GM12878 (cell line): ENCODE measurements at regions of chr3 and their contacts with region 1.

Region 1: DNA sequence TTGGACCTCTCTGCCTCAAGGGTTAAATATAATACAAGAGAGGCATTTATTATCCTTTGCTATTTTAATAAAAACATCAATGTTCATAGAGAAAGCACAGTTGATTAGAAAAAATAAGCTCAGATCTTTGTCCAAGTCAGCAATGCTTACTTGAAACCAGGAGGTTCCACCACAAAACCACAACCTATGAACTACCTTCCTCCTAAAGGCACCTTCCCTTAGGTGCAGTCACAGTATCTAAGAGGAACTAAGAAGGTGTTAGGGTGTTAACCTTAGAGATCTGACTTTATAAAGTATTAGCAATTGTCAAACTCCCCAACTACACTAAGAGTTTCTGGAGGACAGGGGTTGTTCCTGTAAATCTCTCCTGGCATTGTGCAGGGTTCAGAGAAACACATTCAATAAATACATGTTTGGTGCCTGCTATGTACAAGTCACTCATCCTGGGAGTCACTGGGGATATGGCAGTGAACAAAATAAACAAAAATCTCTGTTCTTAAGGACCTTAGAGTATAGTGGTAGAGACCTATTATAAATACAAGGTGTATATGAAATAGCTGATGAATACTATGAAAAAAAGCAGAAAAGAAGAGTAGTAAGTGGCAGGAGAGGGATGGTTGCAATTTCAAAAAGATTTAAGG is 208.6 kb downstream of the NFKBIZ start:
- DNase-seq: peak; percentile 85
- ATAC-seq: peak; percentile 79
- H3K4me3 ChIP-seq: no peak overlapping the region
- H3K27ac ChIP-seq: peak overlapping the region; percentile 65
- H3K4me1 ChIP-seq: peaks cover 37% of the 10 kb centered on the region
- H3K27me3 ChIP-seq: no peaks in the 10 kb centered on the region
- CTCF ChIP-seq: no peak
- EP300 ChIP-seq: peak; percentile 76 to 79; a peak in 3 of 4 replicates
- POLR2A ChIP-seq: no peak
- RAD21 ChIP-seq: no peak

Region 2: DNA sequence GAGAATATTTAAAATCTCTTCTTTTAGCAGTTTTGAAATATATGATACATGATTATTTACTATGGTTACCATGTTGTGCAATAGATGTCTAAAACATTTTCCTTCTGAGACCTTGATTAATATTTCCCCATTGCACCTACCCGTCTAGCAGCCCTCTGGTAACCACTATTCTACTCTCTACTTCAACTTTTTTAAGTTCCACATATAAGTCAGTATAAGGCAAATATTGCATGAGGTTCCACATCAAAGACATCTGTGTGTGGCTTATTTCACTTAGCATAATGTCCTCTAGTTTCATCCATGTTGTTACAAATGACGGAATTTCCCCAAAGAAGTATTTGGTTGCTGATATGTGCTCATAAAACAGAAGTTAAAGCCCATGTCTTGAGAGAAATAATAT is 238.1 kb before region 1 on chr3:
- CTCF ChIA-PET with region 1: interaction called, 8 read pairs
- POLR2A ChIA-PET with region 1: interaction called, 7 read pairs
- RAD21 ChIA-PET with region 1: interaction called, 8 read pairs
- SMC1A ChIA-PET with region 1: interaction called, 16 read pairs
- in situ Hi-C with region 1: no loop called
- intact Hi-C with region 1: no loop called
- DNase-seq: no peak
- ATAC-seq: peak; percentile 93
- H3K4me3 ChIP-seq: no peak overlapping the region
- H3K27ac ChIP-seq: no peak overlapping the region
- H3K4me1 ChIP-seq: peaks cover 24% of the 10 kb centered on the region
- H3K27me3 ChIP-seq: no peaks in the 10 kb centered on the region
- CTCF ChIP-seq: no peak
- EP300 ChIP-seq: peak in 1 of 2 experiments; percentile 47; a peak in 1 of 4 replicates
- POLR2A ChIP-seq: no peak
- RAD21 ChIP-seq: no peak

Region 3: GRCh38 chr3:101836652-101837598 is 221.0 kb before region 1 on chr3:
- CTCF ChIA-PET with region 1: no interaction called
- POLR2A ChIA-PET with region 1: no interaction called
- RAD21 ChIA-PET with region 1: interaction called, 17 read pairs
- SMC1A ChIA-PET with region 1: interaction called, 3 read pairs
- in situ Hi-C with region 1: no loop called
- intact Hi-C with region 1: no loop called
- DNase-seq: no peak
- ATAC-seq: peak; percentile 35
- H3K4me3 ChIP-seq: peak overlapping the region; percentile 32; the same call in 1 of the 2 replicates
- H3K27ac ChIP-seq: 0 out of 2 replicates have a peak overlapping the region, but pooled peaks have one; percentile 27
- H3K4me1 ChIP-seq: peaks cover 40% of the 10 kb centered on the region
- H3K27me3 ChIP-seq: no peaks in the 10 kb centered on the region
- CTCF ChIP-seq: no peak
- EP300 ChIP-seq: peak in 1 of 2 experiments; percentile 19; a peak in 1 of 4 replicates
- POLR2A ChIP-seq: no peak
- RAD21 ChIP-seq: no peak

Region 4: DNA sequence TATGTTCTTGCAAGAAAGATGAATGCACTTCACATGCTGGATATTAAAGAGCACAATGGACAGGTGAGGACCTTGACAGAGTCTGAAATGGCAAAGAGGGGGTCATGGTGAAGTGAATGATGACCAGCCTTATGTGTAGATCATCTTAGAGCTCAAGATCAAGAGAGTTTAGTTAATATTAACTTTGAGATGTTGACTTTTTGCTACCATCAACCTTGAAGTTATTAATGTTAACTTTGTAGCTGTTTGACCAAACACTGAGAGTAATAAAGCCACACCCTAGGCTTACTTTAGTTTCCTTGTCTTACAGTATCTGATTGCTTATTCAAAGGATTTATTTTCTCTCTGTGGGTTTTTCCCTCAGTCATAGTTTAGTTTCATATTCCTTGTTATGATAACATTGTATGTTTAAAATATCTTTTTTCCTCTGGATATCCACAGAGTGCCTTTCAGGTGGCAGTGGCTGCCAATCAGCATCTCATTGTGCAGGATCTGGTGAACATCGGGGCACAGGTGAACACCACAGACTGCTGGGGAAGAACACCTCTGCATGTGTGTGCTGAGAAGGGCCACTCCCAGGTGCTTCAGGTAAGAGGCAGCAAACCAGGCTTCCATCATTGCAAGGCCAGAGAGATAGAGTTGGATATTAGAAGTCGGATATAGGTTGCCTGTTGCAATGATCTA is 203.1 kb before region 1 on chr3:
- CTCF ChIA-PET with region 1: interaction called, 3 read pairs
- POLR2A ChIA-PET with region 1: interaction called, 7 read pairs
- RAD21 ChIA-PET with region 1: interaction called, 22 read pairs
- SMC1A ChIA-PET with region 1: interaction called, 14 read pairs
- in situ Hi-C with region 1: no loop called
- intact Hi-C with region 1: loop called (anchors 5 kb)
- DNase-seq: no peak
- ATAC-seq: no peak
- H3K4me3 ChIP-seq: no peak overlapping the region
- H3K27ac ChIP-seq: no peak overlapping the region
- H3K4me1 ChIP-seq: peaks cover 17% of the 10 kb centered on the region
- H3K27me3 ChIP-seq: no peaks in the 10 kb centered on the region
- CTCF ChIP-seq: no peak
- EP300 ChIP-seq: no peak
- POLR2A ChIP-seq: no peak
- RAD21 ChIP-seq: no peak

Region 5: GRCh38 chr3:101884776-101885175 is 173.1 kb before region 1 on chr3:
- CTCF ChIA-PET with region 1: no interaction called
- POLR2A ChIA-PET with region 1: no interaction called
- RAD21 ChIA-PET with region 1: no interaction called
- SMC1A ChIA-PET with region 1: no interaction called
- in situ Hi-C with region 1: no loop called
- intact Hi-C with region 1: no loop called
- DNase-seq: no peak
- ATAC-seq: no peak
- H3K4me3 ChIP-seq: no peak overlapping the region
- H3K27ac ChIP-seq: no peak overlapping the region
- H3K4me1 ChIP-seq: no peaks in the 10 kb centered on the region
- H3K27me3 ChIP-seq: no peaks in the 10 kb centered on the region
- CTCF ChIP-seq: no peak
- EP300 ChIP-seq: no peak
- POLR2A ChIP-seq: no peak
- RAD21 ChIP-seq: no peak

Region 6: DNA sequence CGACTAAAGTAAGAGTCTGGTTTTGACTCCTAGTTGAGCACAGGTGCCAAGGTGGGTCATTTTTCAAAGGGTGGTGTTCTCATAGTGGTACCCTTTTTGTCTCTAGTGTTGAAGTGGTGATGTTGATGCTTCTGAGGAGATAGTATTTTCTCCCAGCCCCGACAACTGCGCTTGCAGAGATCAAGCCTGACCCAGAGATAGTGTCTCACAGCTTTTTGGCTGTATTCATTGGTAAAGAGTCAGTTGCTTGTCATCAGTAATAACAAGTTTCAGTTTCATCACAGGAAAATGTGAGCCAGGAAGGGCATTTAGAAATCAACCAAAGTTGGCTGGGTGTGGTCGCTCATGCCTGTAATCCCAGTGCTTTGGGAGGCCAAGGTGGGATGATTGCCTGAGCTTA is 69.3 kb before region 1 on chr3:
- CTCF ChIA-PET with region 1: no interaction called
- POLR2A ChIA-PET with region 1: interaction called, 5 read pairs
- RAD21 ChIA-PET with region 1: interaction called, 20 read pairs
- SMC1A ChIA-PET with region 1: interaction called, 12 read pairs
- in situ Hi-C with region 1: no loop called
- intact Hi-C with region 1: loop called (anchors 2 kb)
- DNase-seq: no peak
- ATAC-seq: peak; percentile 65
- H3K4me3 ChIP-seq: no peak overlapping the region
- H3K27ac ChIP-seq: peak overlapping the region; percentile 59
- H3K4me1 ChIP-seq: peaks cover 28% of the 10 kb centered on the region
- H3K27me3 ChIP-seq: no peaks in the 10 kb centered on the region
- CTCF ChIP-seq: no peak
- EP300 ChIP-seq: 0 out of 4 replicates have a peak, but pooled peaks of 1 of the 2 experiments have one; percentile 30
- POLR2A ChIP-seq: no peak
- RAD21 ChIP-seq: no peak

Region 7: DNA sequence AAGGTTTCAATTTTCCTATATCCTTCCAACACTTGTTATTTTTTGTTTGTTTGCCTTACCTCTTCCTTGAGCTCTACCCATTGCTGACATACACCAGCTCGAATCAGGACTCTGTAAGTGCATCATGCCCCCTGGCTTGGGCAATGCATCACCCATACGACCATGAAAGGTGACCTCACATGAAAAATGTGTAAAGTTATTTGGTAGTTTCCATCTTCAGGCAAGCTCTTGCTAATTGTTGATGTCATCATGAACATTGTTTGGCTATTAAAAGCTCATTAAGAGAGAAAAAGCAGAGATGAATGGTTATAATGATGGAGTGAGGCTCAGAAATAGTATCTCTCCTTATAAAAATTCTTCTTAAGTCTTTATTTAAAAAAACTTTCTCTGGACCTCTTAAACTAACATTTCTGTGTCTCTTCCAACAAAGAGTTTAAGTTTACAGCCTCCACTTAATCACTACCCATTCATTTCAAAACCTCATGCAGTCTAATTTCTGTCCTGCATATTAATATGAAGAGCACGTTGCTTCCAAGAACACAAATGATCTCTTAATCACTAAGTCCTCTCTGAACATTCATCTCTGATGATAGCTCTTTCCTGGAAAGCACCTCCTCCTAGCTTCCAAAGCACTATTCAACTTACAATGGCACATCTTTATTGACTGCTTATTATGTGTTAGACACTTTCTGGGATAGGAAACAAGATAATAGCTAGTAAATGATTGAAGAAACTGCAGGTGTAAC is 27.7 kb after region 1 on chr3:
- CTCF ChIA-PET with region 1: interaction called, 3 read pairs
- POLR2A ChIA-PET with region 1: interaction called, 13 read pairs
- RAD21 ChIA-PET with region 1: interaction called, 8 read pairs
- SMC1A ChIA-PET with region 1: interaction called, 48 read pairs
- in situ Hi-C with region 1: no loop called
- intact Hi-C with region 1: no loop called
- DNase-seq: no peak
- ATAC-seq: peak; percentile 38
- H3K4me3 ChIP-seq: no peak overlapping the region
- H3K27ac ChIP-seq: no peak overlapping the region
- H3K4me1 ChIP-seq: no peaks in the 10 kb centered on the region
- H3K27me3 ChIP-seq: no peaks in the 10 kb centered on the region
- CTCF ChIP-seq: no peak
- EP300 ChIP-seq: no peak
- POLR2A ChIP-seq: no peak
- RAD21 ChIP-seq: no peak